B cell (primary cell): ENCODE measurements at regions of chr7 and their contacts with region 1.

Region 1: GRCh38 chr7:140304191-140304799 is 94.0 kb downstream of the SLC37A3 start:
- DNase-seq: peak; percentile 81
- ATAC-seq: peak; percentile 92
- H3K4me3 ChIP-seq: no peak overlapping the region
- H3K4me3 Mint-ChIP-seq: peak overlapping the region; percentile 63
- H3K27ac ChIP-seq: peak overlapping the region; percentile 49 to 58
- H3K27ac Mint-ChIP-seq: peak overlapping the region; percentile 96
- H3K4me1 ChIP-seq: peaks cover 6 to 11% of the 10 kb centered on the region in 2 donors
- H3K4me1 Mint-ChIP-seq: peaks cover 7% of the 10 kb centered on the region
- H3K27me3 ChIP-seq: peaks cover 0 to 3% (median 0%) of the 10 kb centered on the region in 4 experiments
- H3K27me3 Mint-ChIP-seq: peaks cover 6% of the 10 kb centered on the region
- CTCF ChIP-seq: peak; percentile 81

Region 2: GRCh38 chr7:138459413-138460175 is 1844.7 kb before region 1 on chr7:
- CTCF ChIA-PET with region 1: no interaction called
- POLR2A ChIA-PET with region 1: no interaction called
- intact Hi-C with region 1: no loop called
- DNase-seq: peak; percentile 99
- ATAC-seq: peak; percentile 87
- H3K4me3 ChIP-seq: peak overlapping the region; percentile 40 to 73 (median 62)
- H3K4me3 Mint-ChIP-seq: peak overlapping the region; percentile 91
- H3K27ac ChIP-seq: peak overlapping the region in 1 of 2 donors; percentile 56
- H3K27ac Mint-ChIP-seq: peak overlapping the region; percentile 94
- H3K4me1 ChIP-seq: peaks cover 9 to 14% of the 10 kb centered on the region in 2 donors
- H3K4me1 Mint-ChIP-seq: peaks cover 19% of the 10 kb centered on the region
- H3K27me3 ChIP-seq: no peaks in the 10 kb centered on the region
- H3K27me3 Mint-ChIP-seq: peaks cover 3% of the 10 kb centered on the region
- CTCF ChIP-seq: no peak

Region 3: GRCh38 chr7:139602143-139602722 is 702.1 kb before region 1 on chr7:
- CTCF ChIA-PET with region 1: no interaction called
- POLR2A ChIA-PET with region 1: no interaction called
- intact Hi-C with region 1: loop called (anchors 10 kb)
- DNase-seq: peak; percentile 18
- ATAC-seq: no peak
- H3K4me3 ChIP-seq: no peak overlapping the region
- H3K4me3 Mint-ChIP-seq: no peak overlapping the region
- H3K27ac ChIP-seq: no peak overlapping the region
- H3K27ac Mint-ChIP-seq: no peak overlapping the region
- H3K4me1 ChIP-seq: no peaks in the 10 kb centered on the region
- H3K4me1 Mint-ChIP-seq: no peaks in the 10 kb centered on the region
- H3K27me3 ChIP-seq: no peaks in the 10 kb centered on the region
- H3K27me3 Mint-ChIP-seq: no peaks in the 10 kb centered on the region
- CTCF ChIP-seq: peak; percentile 55

Region 4: GRCh38 chr7:140053812-140054539 is 250.3 kb before region 1 on chr7:
- CTCF ChIA-PET with region 1: interaction called, 3 read pairs
- POLR2A ChIA-PET with region 1: no interaction called
- intact Hi-C with region 1: loop called (anchors 1 kb)
- DNase-seq: peak; percentile 56
- ATAC-seq: peak; percentile 83
- H3K4me3 ChIP-seq: peak overlapping the region in 2 of 5 experiments; percentile 9 to 15
- H3K4me3 Mint-ChIP-seq: peak overlapping the region; percentile 69
- H3K27ac ChIP-seq: peak overlapping the region; percentile 57 to 81
- H3K27ac Mint-ChIP-seq: peak overlapping the region; percentile 86
- H3K4me1 ChIP-seq: peaks cover 23 to 25% of the 10 kb centered on the region in 2 donors
- H3K4me1 Mint-ChIP-seq: peaks cover 62% of the 10 kb centered on the region
- H3K27me3 ChIP-seq: no peaks in the 10 kb centered on the region
- H3K27me3 Mint-ChIP-seq: no peaks in the 10 kb centered on the region
- CTCF ChIP-seq: no peak

Region 5: DNA sequence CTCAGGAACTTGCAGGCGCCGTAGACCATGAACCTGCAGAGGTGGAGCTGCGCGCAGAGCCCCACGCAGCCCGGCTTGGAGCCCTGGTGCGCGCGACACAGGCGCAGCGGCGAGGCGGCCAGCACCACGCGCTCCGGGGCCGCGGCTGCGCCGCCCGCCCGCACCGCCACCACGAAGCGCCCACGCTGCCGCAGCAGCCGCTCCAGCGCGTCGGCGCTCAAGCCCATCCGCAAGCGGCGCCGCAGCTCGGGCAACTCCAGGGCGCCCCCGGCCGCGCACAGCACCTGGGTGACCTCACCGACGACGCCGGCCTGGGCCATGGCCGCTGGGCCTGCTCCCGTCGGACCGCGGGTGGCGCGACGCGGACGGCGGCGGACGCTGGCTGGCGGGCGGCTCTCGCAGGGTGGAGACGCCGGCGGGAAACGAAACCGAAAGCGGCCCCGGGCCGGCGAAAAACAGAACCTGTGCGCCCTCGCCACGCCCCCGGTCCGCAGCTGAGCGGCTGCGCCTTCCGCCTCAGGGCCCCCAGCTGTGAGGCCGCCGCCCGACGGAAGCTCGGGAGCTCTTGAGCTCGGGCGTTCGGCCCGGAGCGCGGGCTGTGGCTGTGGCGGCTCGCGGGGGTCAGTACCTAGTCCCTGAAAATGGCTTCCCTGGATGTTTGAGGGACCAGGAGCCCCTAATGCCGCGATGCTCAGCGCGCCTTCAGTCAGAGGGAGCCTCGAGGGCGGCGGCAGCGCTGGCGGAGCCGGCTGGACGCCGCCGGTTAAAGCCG is 241.6 kb before region 1 on chr7 and contains the start of gene PARP12:
- CTCF ChIA-PET with region 1: interaction called, 6 read pairs
- POLR2A ChIA-PET with region 1: no interaction called
- intact Hi-C with region 1: loop called (anchors 1 kb)
- DNase-seq: peak; percentile 96
- ATAC-seq: peak; percentile 86
- H3K4me3 ChIP-seq: peak within 1 kb of the TSS; percentile 67 to 89 (median 84)
- H3K4me3 Mint-ChIP-seq: peak within 1 kb of the TSS; percentile 98
- H3K27ac ChIP-seq: peak within 1 kb of the TSS; percentile 86 to 93
- H3K27ac Mint-ChIP-seq: peak within 1 kb of the TSS; percentile 99
- H3K4me1 ChIP-seq: peaks cover 32 to 38% of the 10 kb centered on the region in 2 donors
- H3K4me1 Mint-ChIP-seq: peaks cover 43% of the 10 kb centered on the region
- H3K27me3 ChIP-seq: no peaks in the 10 kb centered on the region
- H3K27me3 Mint-ChIP-seq: no peaks in the 10 kb centered on the region
- CTCF ChIP-seq: no peak
- total RNA-seq, gene PARP12: 160 and 177 TPM in 2 replicates

Region 6: DNA sequence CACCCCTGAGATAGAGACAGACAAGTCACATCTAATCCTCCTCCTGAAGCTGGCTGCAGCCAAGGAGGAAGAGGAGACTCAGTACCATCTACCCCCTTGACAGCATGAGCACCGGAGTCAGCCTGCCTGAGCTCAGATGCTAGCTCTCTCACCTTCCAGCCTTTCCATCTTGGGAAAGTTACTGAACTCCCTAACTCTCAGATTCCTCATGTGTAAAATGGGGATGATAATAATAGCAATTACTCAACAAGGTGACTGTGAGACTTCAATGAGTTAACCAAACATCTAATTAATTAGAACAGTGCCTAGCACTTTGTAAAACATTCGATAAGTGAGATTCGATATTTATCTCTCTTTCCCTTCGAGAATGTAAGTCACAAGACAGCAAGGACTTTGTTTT is 133.9 kb before region 1 on chr7:
- CTCF ChIA-PET with region 1: interaction called, 27 read pairs
- POLR2A ChIA-PET with region 1: interaction called, 4 read pairs
- intact Hi-C with region 1: loop called (anchors 1 kb)
- DNase-seq: no peak
- ATAC-seq: no peak
- H3K4me3 ChIP-seq: no peak overlapping the region
- H3K4me3 Mint-ChIP-seq: peak overlapping the region; percentile 13
- H3K27ac ChIP-seq: no peak overlapping the region
- H3K27ac Mint-ChIP-seq: no peak overlapping the region
- H3K4me1 ChIP-seq: peaks cover 23 to 52% of the 10 kb centered on the region in 2 donors
- H3K4me1 Mint-ChIP-seq: peaks cover 65% of the 10 kb centered on the region
- H3K27me3 ChIP-seq: no peaks in the 10 kb centered on the region
- H3K27me3 Mint-ChIP-seq: no peaks in the 10 kb centered on the region
- CTCF ChIP-seq: no peak

Region 7: DNA sequence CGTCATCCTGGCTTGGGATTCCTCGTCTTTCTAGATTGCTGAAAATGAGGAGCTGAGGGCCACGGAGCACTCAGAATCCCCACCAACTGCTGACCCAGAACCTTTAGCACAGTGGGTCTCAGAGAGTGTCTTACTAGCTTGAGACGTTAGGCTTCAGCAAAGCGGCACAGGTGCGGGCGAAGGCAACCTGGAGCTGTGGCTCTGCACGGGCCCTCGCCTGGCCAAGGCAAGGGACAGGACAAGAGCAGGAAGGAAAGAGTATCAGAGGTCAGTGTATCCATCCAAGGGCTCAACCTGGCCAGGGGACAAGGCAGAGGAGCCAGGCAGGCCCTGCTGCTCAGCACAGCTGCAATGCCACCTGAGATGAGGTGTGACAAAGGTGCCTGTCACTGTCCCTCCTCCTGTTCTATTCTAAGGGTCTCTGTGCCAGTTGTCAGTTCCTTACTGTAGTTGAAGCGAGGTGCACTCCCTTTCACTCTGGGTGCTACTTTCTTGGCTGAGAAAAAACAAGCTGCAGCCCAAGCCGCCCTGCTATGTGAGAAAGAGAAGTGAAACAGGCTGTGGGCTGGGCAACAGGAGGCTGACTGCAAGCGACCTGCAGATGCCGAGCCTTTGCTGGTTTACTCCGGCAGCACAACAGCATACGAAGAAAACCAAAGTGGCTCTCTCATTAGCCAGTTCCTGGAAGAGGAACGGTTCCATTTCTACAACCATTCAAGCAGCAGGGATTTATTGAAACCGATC is 94.3 kb before region 1 on chr7:
- CTCF ChIA-PET with region 1: interaction called, 12 read pairs
- POLR2A ChIA-PET with region 1: no interaction called
- intact Hi-C with region 1: loop called (anchors 1 kb)
- DNase-seq: peak; percentile 92
- ATAC-seq: peak; percentile 94
- H3K4me3 ChIP-seq: peak overlapping the region in 3 of 5 experiments; percentile 4 to 52 (median 36)
- H3K4me3 Mint-ChIP-seq: peak overlapping the region; percentile 85
- H3K27ac ChIP-seq: peak overlapping the region; percentile 86 to 94
- H3K27ac Mint-ChIP-seq: peak overlapping the region; percentile 100
- H3K4me1 ChIP-seq: peaks cover 85 to 88% of the 10 kb centered on the region in 2 donors
- H3K4me1 Mint-ChIP-seq: peaks cover 84% of the 10 kb centered on the region
- H3K27me3 ChIP-seq: no peaks in the 10 kb centered on the region
- H3K27me3 Mint-ChIP-seq: no peaks in the 10 kb centered on the region
- CTCF ChIP-seq: no peak

Region 8: DNA sequence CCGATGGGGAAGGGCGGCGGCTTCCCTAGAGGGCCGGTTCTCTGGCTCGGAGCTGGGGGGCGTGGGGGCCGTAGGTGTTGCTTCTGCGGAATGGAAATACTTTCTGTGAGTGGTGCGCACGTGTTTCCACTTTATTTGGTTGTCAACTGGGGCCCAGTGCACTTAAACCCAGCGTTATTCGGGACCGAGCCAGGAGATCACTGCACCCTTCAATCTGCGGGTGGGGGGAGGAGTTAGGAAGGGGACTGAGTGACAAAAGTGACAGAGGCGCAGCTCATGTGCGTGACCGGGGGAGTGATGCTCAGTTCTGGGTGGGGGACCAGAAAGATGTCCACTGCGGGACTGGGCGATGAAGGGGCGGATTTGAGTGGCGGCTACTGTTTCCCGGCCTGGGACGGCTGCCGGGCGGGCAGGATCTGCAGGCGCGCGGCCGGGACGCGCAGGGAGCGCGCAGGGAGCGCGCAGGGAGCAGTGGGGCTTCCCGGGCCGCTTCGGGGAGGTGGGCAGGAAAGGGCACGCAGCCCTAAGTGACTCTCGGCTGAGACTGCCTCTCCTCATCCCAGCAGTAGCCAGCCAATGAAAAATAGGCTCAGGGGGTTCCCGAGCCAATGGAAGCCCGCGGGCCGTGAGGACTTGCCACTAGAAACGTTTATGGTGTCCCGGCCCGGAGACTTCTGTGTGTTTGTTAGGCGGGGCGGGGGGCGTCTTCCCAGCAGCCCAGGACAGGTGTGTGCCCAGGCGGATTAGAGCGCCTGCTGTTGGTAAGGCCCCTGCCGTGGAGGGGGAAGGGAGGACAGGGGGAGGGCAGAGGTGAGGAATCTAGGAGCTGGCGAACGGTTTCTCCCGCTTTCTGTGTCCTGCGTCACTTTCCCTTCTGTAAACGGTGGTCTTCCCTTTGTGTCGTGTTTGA is 73.2 kb before region 1 on chr7:
- CTCF ChIA-PET with region 1: interaction called, 4 read pairs
- POLR2A ChIA-PET with region 1: interaction called, 10 read pairs
- intact Hi-C with region 1: loop called (anchors 1 kb)
- DNase-seq: peak; percentile 69
- ATAC-seq: peak; percentile 10
- H3K4me3 ChIP-seq: peak overlapping the region; percentile 57 to 80 (median 64)
- H3K4me3 Mint-ChIP-seq: peak overlapping the region; percentile 90
- H3K27ac ChIP-seq: peak overlapping the region; percentile 93 to 96
- H3K27ac Mint-ChIP-seq: peak overlapping the region; percentile 99
- H3K4me1 ChIP-seq: peaks cover 49 to 74% of the 10 kb centered on the region in 2 donors
- H3K4me1 Mint-ChIP-seq: peaks cover 58% of the 10 kb centered on the region
- H3K27me3 ChIP-seq: no peaks in the 10 kb centered on the region
- H3K27me3 Mint-ChIP-seq: no peaks in the 10 kb centered on the region
- CTCF ChIP-seq: no peak

Region 9: GRCh38 chr7:140375892-140376730 is 71.8 kb after region 1 on chr7:
- CTCF ChIA-PET with region 1: no interaction called
- POLR2A ChIA-PET with region 1: no interaction called
- intact Hi-C with region 1: no loop called
- DNase-seq: no peak
- ATAC-seq: no peak
- H3K4me3 ChIP-seq: peak overlapping the region in 1 of 5 experiments; percentile 9
- H3K4me3 Mint-ChIP-seq: peak overlapping the region; percentile 52
- H3K27ac ChIP-seq: peak overlapping the region in 1 of 2 donors; percentile 30
- H3K27ac Mint-ChIP-seq: peak overlapping the region; percentile 28
- H3K4me1 ChIP-seq: peaks cover 4 to 10% of the 10 kb centered on the region in 2 donors
- H3K4me1 Mint-ChIP-seq: peaks cover 9% of the 10 kb centered on the region
- H3K27me3 ChIP-seq: no peaks in the 10 kb centered on the region
- H3K27me3 Mint-ChIP-seq: no peaks in the 10 kb centered on the region
- CTCF ChIP-seq: no peak